Tibial artery (tissue), 4 donors: ENCODE measurements at regions of chr10 and their contacts with region 1.

Region 1: DNA sequence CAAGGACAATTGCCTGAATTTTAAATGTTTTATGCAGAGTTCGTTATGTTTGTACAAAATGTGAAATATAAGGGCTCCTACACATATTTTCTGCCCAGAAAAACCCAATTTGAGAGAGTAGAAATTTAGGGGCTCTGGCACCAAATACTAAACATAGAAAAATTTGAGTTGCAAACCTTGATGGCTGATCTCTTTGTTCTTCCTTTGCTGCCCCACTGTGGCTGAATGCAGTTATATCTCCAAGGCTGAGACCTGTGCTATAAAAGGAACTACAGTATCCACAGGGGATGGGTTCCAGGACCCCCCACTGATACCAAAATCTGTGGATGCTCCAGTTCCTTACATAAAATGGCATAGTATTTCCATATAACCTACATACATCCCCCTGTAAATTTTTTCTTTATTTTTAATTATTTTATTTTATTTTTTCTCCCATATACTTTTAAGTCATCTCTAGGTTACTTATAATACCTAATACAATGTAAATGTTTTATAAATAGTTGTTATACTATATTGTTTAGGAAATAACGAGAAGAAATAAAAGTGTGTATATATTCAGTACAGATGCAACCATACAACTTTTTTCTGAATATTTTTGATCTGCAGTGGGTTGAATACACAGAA is 22.5 kb downstream of the CFAP43 start:
- DNase-seq: peak in 1 of 2 donors; percentile 21
- H3K4me3 ChIP-seq: no peak overlapping the region
- H3K27ac ChIP-seq: no peak overlapping the region
- H3K4me1 ChIP-seq: no peaks in the 10 kb centered on the region
- H3K27me3 ChIP-seq: peaks cover 0 to 12% of the 10 kb centered on the region in 2 donors
- CTCF ChIP-seq: peak; percentile 42 to 48

Region 2: GRCh38 chr10:103895411-103896186 is 314.1 kb before region 1 on chr10:
- intact Hi-C with region 1: loop called (anchors 10 kb)
- DNase-seq: no peak
- H3K4me3 ChIP-seq: no peak overlapping the region
- H3K27ac ChIP-seq: peak overlapping the region; percentile 4 to 37
- H3K4me1 ChIP-seq: peaks cover 0 to 23% (median 7%) of the 10 kb centered on the region in 4 donors
- H3K27me3 ChIP-seq: no peaks in the 10 kb centered on the region
- CTCF ChIP-seq: no peak

Region 3: DNA sequence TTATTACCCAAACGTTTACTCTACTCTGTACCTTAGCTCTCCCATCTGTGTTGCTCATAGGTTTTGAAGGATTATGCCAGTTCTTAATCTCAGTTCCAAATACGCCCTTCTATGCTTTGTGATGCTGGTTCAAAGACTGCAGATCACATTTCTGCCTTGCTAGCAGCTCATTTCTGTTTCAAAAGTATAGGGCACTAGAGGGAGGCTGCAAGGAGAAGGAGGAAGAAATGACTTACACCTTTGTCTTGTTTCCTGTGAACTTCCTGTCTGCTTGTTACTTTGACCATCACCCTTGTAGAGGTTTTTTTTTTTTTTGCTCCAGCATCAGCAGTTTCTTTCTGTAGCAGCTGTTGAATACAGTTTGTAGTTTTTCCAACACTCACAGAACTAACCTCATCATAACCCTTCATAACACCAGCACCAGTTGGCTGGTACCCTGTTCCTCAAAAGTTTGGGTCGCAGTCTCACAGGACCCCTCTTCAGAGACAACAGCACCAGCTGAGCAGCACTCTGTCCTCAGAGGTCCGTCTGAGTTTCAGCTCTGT is 226.2 kb before region 1 on chr10:
- intact Hi-C with region 1: loop called (anchors 5 kb)
- DNase-seq: no peak
- H3K4me3 ChIP-seq: no peak overlapping the region
- H3K27ac ChIP-seq: no peak overlapping the region
- H3K4me1 ChIP-seq: peaks cover 0 to 49% (median 7%) of the 10 kb centered on the region in 4 donors
- H3K27me3 ChIP-seq: no peaks in the 10 kb centered on the region
- CTCF ChIP-seq: no peak

Region 4: DNA sequence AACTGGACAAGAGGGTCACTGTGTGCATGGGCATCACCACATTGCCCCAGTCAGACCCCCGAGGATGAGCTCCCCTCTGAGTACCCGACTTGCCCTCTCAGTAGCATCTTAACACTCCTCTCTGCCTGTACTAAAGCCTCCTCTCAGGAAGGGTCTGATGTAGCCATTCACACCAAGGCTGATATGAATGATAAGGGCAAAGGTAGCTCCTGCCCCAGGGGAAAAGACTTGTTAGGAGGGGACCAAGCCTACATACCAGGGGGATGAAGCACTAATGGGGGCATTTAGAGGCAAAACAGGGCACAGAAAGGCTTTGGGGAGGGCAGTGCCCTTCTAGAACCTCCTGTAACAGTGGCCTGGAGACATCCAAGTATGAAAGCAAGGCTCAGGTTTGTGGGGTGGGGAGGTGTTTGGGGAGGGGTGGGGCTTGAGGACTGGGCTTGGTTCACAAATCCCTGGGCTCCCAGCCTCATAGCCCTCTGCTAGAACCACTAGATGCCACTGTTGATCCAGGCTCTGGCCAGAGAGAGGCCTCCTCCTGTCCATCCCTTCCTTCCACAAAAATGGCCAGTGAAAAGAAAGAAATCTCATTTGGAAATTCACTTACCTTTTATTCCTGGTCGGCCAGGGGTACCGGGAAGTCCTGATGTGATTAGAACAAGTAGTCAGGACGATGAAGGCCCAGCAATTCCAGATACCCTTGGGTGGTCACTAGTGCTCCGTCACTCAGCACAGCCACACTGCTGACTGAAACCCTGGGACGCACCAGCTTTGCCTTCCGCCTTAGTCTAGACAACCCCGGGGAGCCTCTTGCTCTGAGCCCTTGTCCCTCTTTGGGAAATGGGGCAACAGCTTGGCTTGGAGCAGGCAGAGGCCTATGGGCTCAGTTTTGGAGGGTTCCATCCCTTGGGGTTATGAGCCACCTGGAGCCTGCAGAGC is 164.3 kb before region 1 on chr10:
- intact Hi-C with region 1: loop called (anchors 5 kb)
- DNase-seq: no peak
- H3K4me3 ChIP-seq: no peak overlapping the region
- H3K27ac ChIP-seq: no peak overlapping the region
- H3K4me1 ChIP-seq: no peaks in the 10 kb centered on the region
- H3K27me3 ChIP-seq: no peaks in the 10 kb centered on the region
- CTCF ChIP-seq: peak; percentile 54 to 61

Region 5: DNA sequence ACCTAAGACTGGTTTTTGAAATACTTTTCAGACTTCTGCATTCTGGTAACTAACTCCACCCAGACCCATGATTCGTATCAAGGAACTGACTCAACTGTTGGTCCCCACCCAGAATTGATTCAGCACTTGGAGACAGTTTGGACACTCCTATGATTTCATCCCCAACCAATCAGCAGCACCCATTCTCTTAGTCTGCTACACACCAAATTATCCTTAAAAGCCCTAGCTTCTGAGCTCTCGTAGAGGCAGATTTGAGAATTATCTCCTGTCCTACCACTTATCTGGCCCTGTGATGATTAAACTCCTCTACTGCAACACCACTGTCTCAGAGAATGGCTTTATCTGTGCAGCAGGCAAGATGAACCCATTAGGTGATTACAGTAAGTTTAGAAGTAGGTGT is 37.3 kb after region 1 on chr10:
- intact Hi-C with region 1: no loop called
- DNase-seq: no peak
- H3K4me3 ChIP-seq: no peak overlapping the region
- H3K27ac ChIP-seq: no peak overlapping the region
- H3K4me1 ChIP-seq: no peaks in the 10 kb centered on the region
- H3K27me3 ChIP-seq: peaks cover 0 to 20% of the 10 kb centered on the region in 2 donors
- CTCF ChIP-seq: no peak